Activated naive CD8-positive, alpha-beta T cell treated with anti-CD3 and anti-CD28 coated beads, Interleukin-2, amount 10 ng/mL, durations not matched to agents 7 days and 5 days (primary cell): ENCODE measurements at regions of chr22 and their contacts with region 1.

Region 1: DNA sequence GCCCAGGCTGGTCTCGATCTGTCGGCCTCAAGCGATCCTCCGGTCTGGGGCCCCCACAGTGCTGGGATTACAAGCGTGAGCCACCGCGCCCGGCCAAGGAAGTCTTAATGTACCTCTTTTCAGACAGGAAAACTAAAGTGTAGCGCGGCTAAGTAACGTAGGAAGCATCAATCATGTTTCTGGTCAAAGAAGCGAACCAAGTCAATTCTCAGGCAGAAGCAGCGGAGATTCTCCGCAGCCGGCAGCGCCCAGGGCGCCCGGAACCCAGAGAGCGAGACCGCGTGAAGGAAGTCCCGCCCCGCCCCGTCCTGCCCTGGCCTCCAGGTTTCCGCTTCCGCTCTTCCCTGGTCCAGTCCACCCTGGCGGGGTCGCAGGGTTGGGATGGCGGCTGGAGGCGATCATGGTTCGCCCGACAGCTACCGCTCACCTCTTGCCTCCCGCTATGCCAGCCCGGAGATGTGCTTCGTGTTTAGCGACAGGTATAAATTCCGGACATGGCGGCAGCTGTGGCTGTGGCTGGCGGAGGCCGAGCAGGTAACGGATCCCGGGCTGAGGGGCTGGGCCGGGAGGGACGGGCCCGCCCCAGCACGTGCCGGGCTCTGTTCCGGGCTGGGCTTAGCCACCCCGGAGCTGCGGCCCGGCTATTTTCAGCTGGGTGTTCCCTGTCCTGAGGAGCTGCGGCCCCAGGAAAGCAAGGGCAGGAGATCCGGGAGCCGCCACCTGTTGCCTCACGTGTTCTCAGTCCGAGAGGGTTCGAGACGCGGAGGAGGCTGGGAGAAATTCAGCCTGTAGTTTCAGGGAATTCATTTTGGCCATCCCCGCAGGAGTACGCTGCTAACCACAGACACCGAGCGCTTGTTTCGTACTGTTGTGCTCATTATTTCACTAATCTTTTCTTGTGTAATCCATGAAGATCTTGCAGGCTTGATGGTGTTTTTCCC is at the start of gene ADSL:
- DNase-seq: peak; percentile 89
- ATAC-seq: peak; percentile 89
- H3K4me3 Mint-ChIP-seq: peak within 1 kb of the TSS; percentile 96
- H3K27ac Mint-ChIP-seq: peak within 1 kb of the TSS; percentile 98
- H3K4me1 Mint-ChIP-seq: peaks cover 37% of the 10 kb centered on the region
- H3K27me3 Mint-ChIP-seq: no peaks in the 10 kb centered on the region
- total RNA-seq, gene ADSL: 83.6 to 93.9 TPM

Region 2: DNA sequence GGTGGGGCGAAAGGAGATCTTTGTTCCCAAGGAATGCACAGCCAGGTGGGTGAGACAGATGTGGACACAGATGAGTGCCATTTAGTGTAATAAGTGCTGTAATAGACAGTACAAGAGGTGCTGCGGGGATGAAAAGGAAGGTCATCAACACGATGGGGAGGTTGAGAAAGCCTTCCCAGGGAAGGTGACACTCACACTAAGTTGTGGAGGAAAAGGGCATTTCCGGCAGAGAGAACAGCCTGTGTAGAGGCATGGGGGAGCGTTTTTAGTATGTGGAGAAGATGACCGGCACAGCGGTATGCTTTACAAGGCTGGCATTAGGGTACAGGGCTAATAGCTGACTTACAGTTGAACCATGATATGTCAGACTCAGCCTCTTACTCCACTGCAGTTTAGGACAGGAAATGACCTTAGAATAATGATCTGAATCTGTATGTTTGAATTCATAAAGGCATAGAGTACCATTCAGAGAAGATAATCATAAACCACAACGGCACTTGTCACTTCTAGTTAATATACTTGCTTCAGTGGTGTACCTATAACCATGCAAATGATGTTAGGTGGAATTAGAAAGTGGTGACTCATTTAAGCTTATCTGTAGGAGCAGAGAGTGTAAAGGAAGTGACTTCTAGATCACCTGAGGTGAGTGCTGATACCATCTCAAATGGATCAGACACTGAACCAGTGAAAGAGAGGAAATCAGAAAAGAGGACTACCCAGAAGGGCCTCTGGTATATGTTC is 291.1 kb before region 1 on chr22:
- POLR2A ChIA-PET with region 1: interaction called, 10 read pairs
- DNase-seq: no peak
- ATAC-seq: peak; percentile 91
- H3K4me3 Mint-ChIP-seq: peak overlapping the region; percentile 84
- H3K27ac Mint-ChIP-seq: peak overlapping the region; percentile 96
- H3K4me1 Mint-ChIP-seq: peaks cover 68% of the 10 kb centered on the region
- H3K27me3 Mint-ChIP-seq: no peaks in the 10 kb centered on the region

Region 3: GRCh38 chr22:40177738-40178416 is 168.6 kb before region 1 on chr22 and contains the start of gene TNRC6B:
- POLR2A ChIA-PET with region 1: interaction called, 29 read pairs
- DNase-seq: no peak
- ATAC-seq: peak; percentile 85
- H3K4me3 Mint-ChIP-seq: peak within 1 kb of the TSS; percentile 86
- H3K27ac Mint-ChIP-seq: peak within 1 kb of the TSS; percentile 87
- H3K4me1 Mint-ChIP-seq: peaks cover 43% of the 10 kb centered on the region
- H3K27me3 Mint-ChIP-seq: no peaks in the 10 kb centered on the region
- total RNA-seq, gene TNRC6B: 89.6 to 91.4 TPM

Region 4: GRCh38 chr22:40289991-40290459 is 56.4 kb before region 1 on chr22:
- POLR2A ChIA-PET with region 1: interaction called, 17 read pairs
- DNase-seq: peak; percentile 69
- ATAC-seq: peak; percentile 87
- H3K4me3 Mint-ChIP-seq: peak overlapping the region; percentile 67
- H3K27ac Mint-ChIP-seq: peak overlapping the region; percentile 89
- H3K4me1 Mint-ChIP-seq: peaks cover 21% of the 10 kb centered on the region
- H3K27me3 Mint-ChIP-seq: no peaks in the 10 kb centered on the region

Region 5: DNA sequence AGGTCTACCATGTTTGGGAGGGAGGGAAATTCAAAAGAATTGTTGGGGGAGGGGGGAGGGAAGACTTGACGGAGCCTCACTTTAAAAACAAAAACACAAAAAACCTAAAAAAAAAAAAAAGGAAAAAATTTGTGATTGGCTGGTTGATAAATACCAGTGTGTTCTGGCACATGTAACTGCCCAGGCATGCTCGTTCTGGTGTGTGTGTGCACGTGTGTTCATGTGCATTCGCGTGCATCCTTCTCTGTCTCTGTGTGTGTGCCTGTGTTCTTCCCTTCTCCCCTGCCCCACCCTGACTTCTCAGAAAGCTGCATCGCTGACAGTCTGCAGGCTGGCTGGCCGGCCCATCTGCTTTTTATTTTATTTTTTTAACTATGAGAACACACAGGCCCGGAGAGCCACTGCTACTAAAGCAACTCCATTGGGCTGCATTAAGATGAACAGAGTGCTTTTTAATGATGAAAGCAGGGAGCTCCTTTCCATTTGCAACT is 22.7 kb before region 1 on chr22:
- POLR2A ChIA-PET with region 1: interaction called, 21 read pairs
- DNase-seq: peak; percentile 43
- ATAC-seq: peak; percentile 48
- H3K4me3 Mint-ChIP-seq: peak overlapping the region; percentile 87
- H3K27ac Mint-ChIP-seq: peak overlapping the region; percentile 96
- H3K4me1 Mint-ChIP-seq: peaks cover 52% of the 10 kb centered on the region
- H3K27me3 Mint-ChIP-seq: no peaks in the 10 kb centered on the region

Region 6: DNA sequence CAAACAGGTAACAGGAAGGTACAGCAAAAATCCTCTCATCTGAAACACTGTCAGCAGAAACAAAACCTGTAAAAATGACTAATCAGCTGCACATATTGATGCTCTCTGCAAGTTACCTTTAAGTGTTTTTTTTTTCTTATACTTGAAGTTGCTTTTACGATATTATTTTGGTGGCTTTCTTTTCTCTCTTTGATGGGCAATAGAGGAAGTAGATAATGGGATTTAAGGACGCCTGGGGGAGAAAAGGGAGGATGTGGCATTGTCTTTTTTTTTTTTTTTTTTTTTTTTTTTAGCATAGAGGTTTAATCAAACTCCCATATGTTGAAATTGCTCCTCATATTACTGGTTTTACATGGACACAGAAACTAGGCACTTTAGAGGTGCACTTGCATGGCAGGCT is 11.5 kb before region 1 on chr22:
- POLR2A ChIA-PET with region 1: interaction called, 19 read pairs
- DNase-seq: no peak
- ATAC-seq: peak; percentile 41
- H3K4me3 Mint-ChIP-seq: peak overlapping the region; percentile 71
- H3K27ac Mint-ChIP-seq: peak overlapping the region; percentile 72
- H3K4me1 Mint-ChIP-seq: peaks cover 56% of the 10 kb centered on the region
- H3K27me3 Mint-ChIP-seq: no peaks in the 10 kb centered on the region

Region 7: GRCh38 chr22:40385036-40385782 is 38.8 kb after region 1 on chr22:
- POLR2A ChIA-PET with region 1: no interaction called
- DNase-seq: no peak
- ATAC-seq: peak; percentile 85
- H3K4me3 Mint-ChIP-seq: peak overlapping the region; percentile 82
- H3K27ac Mint-ChIP-seq: peak overlapping the region; percentile 96
- H3K4me1 Mint-ChIP-seq: peaks cover 38% of the 10 kb centered on the region
- H3K27me3 Mint-ChIP-seq: no peaks in the 10 kb centered on the region

Region 8: DNA sequence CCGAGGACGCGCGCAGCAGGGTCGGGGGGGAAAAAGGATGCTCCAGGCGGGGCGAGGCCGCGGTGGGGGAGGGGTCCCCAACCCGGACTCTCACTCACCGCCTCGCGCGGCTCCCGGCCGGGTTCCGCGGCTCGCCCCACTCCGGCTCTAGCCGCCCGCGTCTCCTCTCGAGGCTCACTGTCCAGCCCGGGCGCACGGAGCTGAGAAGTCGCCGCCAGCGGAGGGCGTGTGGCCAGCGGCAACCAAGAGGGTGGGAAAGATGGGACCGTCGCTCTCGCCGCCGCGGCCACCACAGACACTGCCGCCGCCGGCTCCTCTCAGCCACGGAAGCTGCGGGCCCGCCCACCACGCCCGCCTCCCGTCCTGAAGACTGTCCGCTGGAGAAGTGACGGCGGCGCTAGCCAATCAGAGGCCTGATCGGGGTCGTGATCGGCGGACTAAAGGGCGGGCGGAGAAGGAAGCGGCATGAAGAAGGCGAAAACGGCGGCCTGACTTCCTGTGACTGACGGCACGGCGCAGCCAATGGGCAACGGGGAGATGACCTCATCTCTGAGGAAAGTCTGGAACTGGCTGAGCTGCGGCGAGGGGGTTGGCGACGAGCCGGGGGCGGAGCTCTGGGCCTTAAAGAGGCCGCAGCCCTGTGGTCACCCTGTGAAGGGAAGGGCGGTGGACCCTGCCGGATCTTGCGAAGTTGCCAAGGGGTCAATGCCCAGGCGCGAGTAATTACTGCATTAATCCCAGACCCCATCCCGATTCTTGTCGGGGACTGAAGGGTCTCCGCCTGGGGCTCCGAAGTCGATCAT is 290.1 kb after region 1 on chr22 and contains the start of gene MRTFA:
- POLR2A ChIA-PET with region 1: interaction called, 11 read pairs
- DNase-seq: peak; percentile 97
- ATAC-seq: peak; percentile 97
- H3K4me3 Mint-ChIP-seq: peak within 1 kb of the TSS; percentile 94
- H3K27ac Mint-ChIP-seq: peak within 1 kb of the TSS; percentile 96
- H3K4me1 Mint-ChIP-seq: peaks cover 21% of the 10 kb centered on the region
- H3K27me3 Mint-ChIP-seq: no peaks in the 10 kb centered on the region
- total RNA-seq, gene MRTFA: 72.5 to 76.3 TPM